ENCODE measurements at regions of chr9 and their contacts with region 1.

Region 1: DNA sequence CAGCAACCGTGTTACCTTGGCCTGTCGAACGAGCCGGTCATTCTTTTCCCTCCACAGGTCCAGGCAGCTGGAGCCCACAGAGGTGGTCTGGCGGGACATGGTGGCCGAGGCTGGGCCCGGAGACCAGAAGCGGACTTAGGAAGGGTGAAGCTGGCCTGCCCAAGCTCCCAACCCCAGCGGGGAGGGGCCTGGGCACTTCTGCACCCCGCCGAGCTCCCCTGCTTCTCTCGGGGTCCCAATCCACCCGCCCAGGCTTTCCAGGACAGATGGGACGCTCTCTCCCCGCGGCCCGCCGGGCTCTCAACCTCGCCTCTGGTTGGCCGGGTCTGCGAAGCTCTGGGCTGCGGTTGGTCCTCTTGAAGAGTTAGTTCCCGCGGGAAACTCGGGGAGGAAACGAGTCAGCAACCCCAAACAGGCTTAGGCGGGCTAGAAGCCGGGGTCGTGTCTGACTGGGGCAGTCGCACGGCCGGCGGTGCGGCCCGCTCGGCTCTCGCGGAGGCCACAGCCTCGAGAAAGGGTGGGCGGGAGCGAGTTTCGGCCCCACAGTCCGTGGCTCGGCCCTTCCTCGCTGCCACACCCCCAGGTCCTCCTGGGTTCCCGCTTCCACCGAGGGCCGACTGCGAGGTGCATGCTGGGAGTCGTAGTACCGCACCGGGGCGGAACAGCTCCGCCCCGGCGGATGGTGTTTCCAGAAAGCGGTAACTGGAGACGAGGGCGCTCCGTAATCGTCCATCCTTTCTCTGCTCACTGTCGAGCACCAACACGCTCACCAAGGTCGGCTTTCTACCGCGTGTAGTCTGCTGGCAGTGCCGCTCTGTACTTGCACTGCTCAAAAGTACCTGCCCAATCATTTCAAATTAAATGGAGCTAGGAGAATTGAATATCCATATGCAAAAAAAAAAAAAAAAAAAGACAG is at the start of gene FANCG:
- DNase-seq: peak; percentile 95
- H3K4me3 ChIP-seq: peak within 1 kb of the TSS; percentile 62 to 74 (median 72)
- H3K27ac ChIP-seq: peak within 1 kb of the TSS; percentile 70 to 87 (median 78)
- H3K4me1 ChIP-seq: peaks cover 0 to 20% (median 16%) of the 10 kb centered on the region in 4 donors
- H3K27me3 ChIP-seq: no peaks in the 10 kb centered on the region
- CTCF ChIP-seq: no peak
- EP300 ChIP-seq: no peak
- POLR2A ChIP-seq: no peak
- total RNA-seq, gene FANCG: 3.2 to 17.0 (median 12.9) TPM

Region 2: DNA sequence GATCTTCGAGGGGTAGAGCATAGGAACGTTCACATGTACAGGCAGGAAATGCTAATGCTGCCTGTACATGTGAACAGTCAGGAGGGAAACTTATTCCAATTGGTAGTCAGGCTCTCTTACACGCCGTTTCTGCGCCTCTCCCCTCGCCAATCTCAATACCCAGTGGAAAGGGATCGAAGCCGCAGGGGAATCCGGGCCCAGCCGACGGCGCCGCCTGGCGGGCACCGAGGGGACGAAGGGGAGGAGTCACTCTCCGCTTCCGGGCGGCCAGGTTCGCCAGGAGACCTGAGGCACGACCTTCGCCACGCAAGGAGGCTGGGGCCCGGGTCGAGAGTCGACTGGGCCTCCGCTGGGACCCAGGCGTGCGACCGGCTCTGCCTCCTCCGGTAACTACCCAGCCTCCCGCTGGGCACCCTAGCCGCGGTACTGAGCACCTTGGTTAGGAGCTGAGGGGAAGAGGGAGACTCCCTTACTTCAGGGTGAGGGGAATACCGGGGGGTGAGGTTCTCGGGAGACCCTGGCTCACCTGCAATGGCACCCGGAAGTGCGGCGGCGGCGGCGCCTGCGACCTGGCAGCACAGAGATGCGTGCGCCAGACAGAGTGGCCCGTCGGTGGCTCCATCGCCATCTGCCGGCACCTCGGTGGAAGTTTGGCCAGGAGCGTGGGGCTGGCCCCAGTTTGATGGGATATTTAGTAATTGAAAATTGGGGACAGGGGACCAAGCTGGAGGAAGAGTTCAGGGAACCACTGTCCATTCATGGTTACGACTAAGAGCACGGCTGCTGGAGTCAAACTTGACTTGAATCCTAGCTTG is 16.6 kb after region 1 on chr9 and contains the start of gene PIGO:
- intact Hi-C with region 1: loop called (anchors 2 kb)
- DNase-seq: peak; percentile 94
- H3K4me3 ChIP-seq: peak within 1 kb of the TSS; percentile 77 to 95 (median 80)
- H3K27ac ChIP-seq: peak within 1 kb of the TSS; percentile 91 to 96 (median 92)
- H3K4me1 ChIP-seq: peaks cover 0 to 16% (median 13%) of the 10 kb centered on the region in 4 donors
- H3K27me3 ChIP-seq: no peaks in the 10 kb centered on the region
- CTCF ChIP-seq: peak; percentile 62 to 88 (median 66)
- EP300 ChIP-seq: no peak
- POLR2A ChIP-seq: peak in 1 of 2 donors; percentile 34
- total RNA-seq, gene PIGO: 5.9 to 13.6 (median 9.1) TPM

Region 3: DNA sequence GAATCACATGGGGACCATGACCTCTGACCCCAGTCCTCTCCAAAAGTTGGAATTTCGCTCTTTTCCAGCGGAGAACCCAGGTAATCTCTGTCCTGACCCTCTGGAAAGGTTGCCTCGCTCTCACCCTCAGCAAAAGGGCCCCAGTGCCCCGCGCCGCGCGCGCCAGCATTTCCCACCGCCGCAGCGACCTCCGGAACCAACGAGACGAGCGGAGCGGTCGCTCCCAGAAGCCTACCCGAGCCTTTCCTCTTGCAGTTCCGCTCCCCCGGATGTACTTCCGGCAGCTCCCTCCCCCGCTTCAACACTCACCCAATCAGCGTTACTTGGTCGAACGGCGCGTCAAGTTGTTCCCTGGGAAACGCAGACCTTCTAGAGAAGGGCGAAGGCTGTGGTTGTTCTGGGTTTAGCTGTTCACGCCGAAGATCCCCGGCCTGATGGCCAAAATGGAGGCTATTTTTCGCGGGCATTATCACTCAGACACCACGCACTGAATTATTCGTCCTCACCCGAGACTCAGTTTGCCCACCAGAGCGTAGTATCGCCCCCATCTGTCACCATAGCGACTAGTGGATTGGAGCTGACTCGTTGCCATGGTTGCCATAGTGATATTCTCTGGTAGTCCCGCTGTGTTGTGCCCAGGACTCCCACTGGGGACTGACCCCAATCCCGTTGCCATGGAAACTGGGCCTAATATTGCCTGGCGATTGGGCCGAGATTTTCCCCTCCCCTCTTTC is 23.4 kb after region 1 on chr9 and contains the start of gene STOML2:
- intact Hi-C with region 1: loop called (anchors 2 kb)
- DNase-seq: peak; percentile 98
- H3K4me3 ChIP-seq: peak within 1 kb of the TSS; percentile 48 to 85 (median 66)
- H3K27ac ChIP-seq: peak within 1 kb of the TSS; percentile 78 to 95 (median 88)
- H3K4me1 ChIP-seq: peaks cover 0 to 28% (median 23%) of the 10 kb centered on the region in 4 donors
- H3K27me3 ChIP-seq: no peaks in the 10 kb centered on the region
- CTCF ChIP-seq: no peak
- EP300 ChIP-seq: no peak
- POLR2A ChIP-seq: peak; percentile 35 to 48
- total RNA-seq, gene STOML2: 87.2 to 144 (median 116) TPM

Region 4: DNA sequence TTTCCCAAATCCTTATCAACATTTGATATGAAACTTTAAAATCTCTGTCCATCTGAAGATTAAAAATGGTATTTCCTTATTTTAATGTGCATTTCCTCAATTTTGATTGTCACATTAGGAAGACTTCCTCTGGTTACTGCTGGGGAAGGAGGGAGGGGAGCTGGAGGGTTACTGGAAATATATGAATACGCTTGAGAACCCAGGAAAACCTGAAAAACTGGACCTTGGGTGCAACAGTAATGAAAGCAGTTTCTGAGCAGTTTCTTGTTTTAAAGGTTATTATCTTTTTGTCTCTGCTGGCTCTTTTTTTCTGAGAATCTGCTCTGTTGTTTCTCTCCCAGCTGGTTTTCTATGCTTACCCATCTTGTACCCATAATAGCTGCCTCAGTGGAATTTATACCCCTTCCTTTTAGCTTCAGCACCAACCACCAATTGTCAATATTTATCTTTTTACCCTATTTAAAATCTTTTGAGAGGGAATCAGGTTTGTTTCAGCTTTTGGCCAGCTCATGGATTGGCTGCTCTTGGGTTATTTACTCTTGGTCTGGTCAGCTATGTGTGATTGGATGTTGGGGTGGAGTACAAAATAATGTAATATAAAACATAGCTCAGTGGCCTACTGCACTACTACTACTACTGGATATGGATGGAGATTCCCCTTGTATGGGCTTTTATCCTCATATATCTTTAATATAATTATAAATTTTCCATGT is 149.5 kb after region 1 on chr9:
- intact Hi-C with region 1: no loop called
- DNase-seq: no peak
- H3K4me3 ChIP-seq: no peak overlapping the region
- H3K27ac ChIP-seq: no peak overlapping the region
- H3K4me1 ChIP-seq: peaks cover 0 to 9% (median 0%) of the 10 kb centered on the region in 4 donors
- H3K27me3 ChIP-seq: no peaks in the 10 kb centered on the region
- CTCF ChIP-seq: no peak
- EP300 ChIP-seq: no peak
- POLR2A ChIP-seq: no peak